ENCODE measurements at regions of chr1 and their contacts with region 1.

Region 1: DNA sequence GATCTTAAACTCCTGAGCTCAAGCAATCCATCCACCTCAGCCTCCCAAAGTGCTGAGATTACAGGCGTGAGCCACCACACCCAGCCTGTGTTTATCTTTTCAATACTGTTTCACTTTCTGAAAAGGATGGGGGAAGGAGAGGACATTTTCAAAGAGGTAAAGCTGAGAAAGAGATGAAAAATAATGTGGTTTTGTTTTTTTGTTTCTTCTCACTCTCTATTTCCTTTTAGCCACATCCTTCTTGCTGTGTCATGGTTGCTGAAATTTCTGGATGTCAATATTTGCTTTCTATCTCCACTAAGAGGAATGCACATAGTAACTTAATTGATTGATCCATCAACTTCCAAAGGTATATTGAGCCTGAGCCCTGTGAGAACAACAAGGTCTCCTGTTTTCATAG is 6.4 kb upstream of the C1orf21 start:
- DNase-seq: no peak
- ATAC-seq: no peak
- H3K4me3 ChIP-seq: no peak overlapping the region
- H3K27ac ChIP-seq: no peak overlapping the region
- H3K4me1 ChIP-seq: no peaks in the 10 kb centered on the region
- H3K27me3 ChIP-seq: peaks cover 15% of the 10 kb centered on the region
- CTCF ChIP-seq: no peak
- POLR2A ChIP-seq: no peak
- RAD21 ChIP-seq: no peak

Region 2: GRCh38 chr1:183932412-183932811 is 448.1 kb before region 1 on chr1:
- CTCF ChIA-PET with region 1: no interaction called
- POLR2A ChIA-PET with region 1: no interaction called
- dilution Hi-C with region 1: no loop called
- in situ Hi-C with region 1: no loop called
- intact Hi-C with region 1: loop called (anchors 5 kb)
- DNase-seq: peak; percentile 90
- ATAC-seq: peak; percentile 89
- H3K4me3 ChIP-seq: no peak overlapping the region
- H3K27ac ChIP-seq: no peak overlapping the region
- H3K4me1 ChIP-seq: peaks cover 3% of the 10 kb centered on the region
- H3K27me3 ChIP-seq: no peaks in the 10 kb centered on the region
- CTCF ChIP-seq: no peak
- POLR2A ChIP-seq: no peak
- RAD21 ChIP-seq: no peak

Region 3: GRCh38 chr1:184186167-184186566 is 194.3 kb before region 1 on chr1:
- CTCF ChIA-PET with region 1: no interaction called
- POLR2A ChIA-PET with region 1: no interaction called
- dilution Hi-C with region 1: no loop called
- in situ Hi-C with region 1: no loop called
- intact Hi-C with region 1: no loop called
- DNase-seq: no peak
- ATAC-seq: no peak
- H3K4me3 ChIP-seq: no peak overlapping the region
- H3K27ac ChIP-seq: no peak overlapping the region
- H3K4me1 ChIP-seq: peaks cover 2% of the 10 kb centered on the region
- H3K27me3 ChIP-seq: peaks cover 6% of the 10 kb centered on the region; the same call in 1 of the 2 replicates
- CTCF ChIP-seq: no peak
- POLR2A ChIP-seq: no peak
- RAD21 ChIP-seq: no peak

Region 4: DNA sequence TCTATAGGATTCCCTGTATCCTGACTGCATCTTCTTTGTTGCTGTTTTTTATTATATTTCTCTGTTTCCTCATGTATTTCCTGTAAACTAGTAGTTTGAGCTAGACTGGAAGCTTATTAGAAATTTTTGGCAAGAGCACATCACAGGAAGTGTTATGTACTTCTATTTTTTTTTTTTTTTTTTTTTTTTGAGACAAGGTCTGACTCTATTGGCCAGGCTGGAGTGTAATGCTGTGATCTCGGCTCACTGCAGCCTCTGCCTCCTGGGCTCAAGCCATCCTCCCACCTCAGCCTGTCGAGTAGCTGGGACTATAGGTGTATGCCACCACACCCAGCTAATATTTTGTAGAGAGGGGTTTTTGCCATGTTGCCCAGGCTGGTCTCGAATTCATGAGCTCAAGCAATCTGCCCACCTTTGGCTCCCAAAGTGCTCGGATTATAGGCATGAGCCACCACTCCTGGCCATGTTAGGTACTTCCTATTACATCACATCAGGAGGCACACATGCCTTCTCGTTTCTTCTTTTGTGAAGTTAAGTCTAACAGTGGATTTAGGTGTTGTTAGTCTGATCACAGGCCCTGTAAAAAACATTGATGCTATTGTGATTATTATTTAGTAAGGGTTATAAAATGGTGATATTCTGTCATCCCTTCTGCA is 18.9 kb after region 1 on chr1:
- CTCF ChIA-PET with region 1: no interaction called
- POLR2A ChIA-PET with region 1: no interaction called
- dilution Hi-C with region 1: no loop called
- in situ Hi-C with region 1: no loop called
- intact Hi-C with region 1: no loop called
- DNase-seq: no peak
- ATAC-seq: no peak
- H3K4me3 ChIP-seq: no peak overlapping the region
- H3K27ac ChIP-seq: no peak overlapping the region
- H3K4me1 ChIP-seq: no peaks in the 10 kb centered on the region
- H3K27me3 ChIP-seq: no peaks in the 10 kb centered on the region
- CTCF ChIP-seq: no peak
- POLR2A ChIP-seq: no peak
- RAD21 ChIP-seq: no peak

Region 5: DNA sequence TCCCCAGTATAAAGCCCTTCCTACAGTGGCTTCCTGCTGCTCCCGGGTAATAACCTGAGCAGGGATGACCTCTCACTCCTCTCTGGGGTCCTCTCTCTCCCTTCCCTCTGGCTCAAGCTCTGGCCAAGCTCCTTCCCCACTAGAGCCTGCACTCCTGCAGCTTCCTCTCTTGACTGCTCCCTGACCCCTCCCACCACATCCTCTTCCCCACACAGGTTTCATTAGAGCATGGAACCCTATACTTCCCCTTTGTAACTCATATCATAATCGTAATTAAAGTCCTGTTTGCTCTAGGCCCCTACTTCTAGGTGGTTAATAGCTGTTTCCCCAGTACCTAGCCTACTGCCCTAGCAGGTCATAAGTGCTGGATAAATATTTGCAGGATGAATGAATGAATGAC is 152.6 kb after region 1 on chr1:
- CTCF ChIA-PET with region 1: no interaction called
- POLR2A ChIA-PET with region 1: no interaction called
- dilution Hi-C with region 1: no loop called
- in situ Hi-C with region 1: no loop called
- intact Hi-C with region 1: no loop called
- DNase-seq: no peak
- ATAC-seq: no peak
- H3K4me3 ChIP-seq: no peak overlapping the region
- H3K27ac ChIP-seq: no peak overlapping the region
- H3K4me1 ChIP-seq: no peaks in the 10 kb centered on the region
- H3K27me3 ChIP-seq: no peaks in the 10 kb centered on the region
- CTCF ChIP-seq: no peak
- POLR2A ChIP-seq: no peak
- RAD21 ChIP-seq: no peak

Measured in IMR-90 (cell line).